ENCODE measurements at regions of chr11 and their contacts with region 1.

Region 1: GRCh38 chr11:40255457-40255856 is 1204.0 kb downstream of the LRRC4C start:
- DNase-seq: no peak
- H3K4me3 ChIP-seq: no peak overlapping the region
- H3K27ac ChIP-seq: no peak overlapping the region
- H3K4me1 ChIP-seq: no peaks in the 10 kb centered on the region
- H3K27me3 ChIP-seq: no peaks in the 10 kb centered on the region
- CTCF ChIP-seq: no peak
- POLR2A ChIP-seq: no peak

Region 2: GRCh38 chr11:40175216-40175615 is 80.2 kb before region 1 on chr11:
- intact Hi-C with region 1: loop called (anchors 5 kb)
- DNase-seq: no peak
- H3K4me3 ChIP-seq: no peak overlapping the region
- H3K27ac ChIP-seq: no peak overlapping the region
- H3K4me1 ChIP-seq: no peaks in the 10 kb centered on the region
- H3K27me3 ChIP-seq: no peaks in the 10 kb centered on the region
- CTCF ChIP-seq: no peak
- POLR2A ChIP-seq: no peak

Region 3: DNA sequence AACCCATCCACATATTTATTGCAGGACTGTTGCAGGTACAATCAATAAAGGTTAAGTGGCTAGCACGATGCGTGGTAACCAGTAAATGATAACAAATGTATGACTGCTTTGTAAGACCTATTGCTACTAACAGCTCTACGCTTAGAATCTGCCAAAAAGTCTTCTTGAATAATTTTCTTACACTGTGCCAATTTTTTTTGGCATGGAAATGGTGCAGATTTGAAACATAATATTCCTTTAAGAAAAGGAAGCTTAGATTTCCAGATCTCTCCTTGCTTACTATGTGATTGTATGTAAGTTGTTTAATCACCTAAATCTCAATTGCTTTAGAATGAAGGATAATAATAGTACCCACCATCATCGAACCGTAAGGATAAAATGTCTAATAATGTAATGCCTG is 1012.0 kb after region 1 on chr11:
- intact Hi-C with region 1: no loop called
- DNase-seq: no peak
- H3K4me3 ChIP-seq: no peak overlapping the region
- H3K27ac ChIP-seq: no peak overlapping the region
- H3K4me1 ChIP-seq: no peaks in the 10 kb centered on the region
- H3K27me3 ChIP-seq: no peaks in the 10 kb centered on the region
- CTCF ChIP-seq: no peak
- POLR2A ChIP-seq: no peak